Spleen (tissue), 13 donors: ENCODE measurements at regions of chr4 and their contacts with region 1.

Region 1: GRCh38 chr4:18366892-18367291 is 345.3 kb upstream of the LCORL start:
- DNase-seq: no peak
- H3K4me3 ChIP-seq: no peak overlapping the region
- H3K27ac ChIP-seq: no peak overlapping the region
- H3K4me1 ChIP-seq: no peaks in the 10 kb centered on the region
- H3K27me3 ChIP-seq: no peaks in the 10 kb centered on the region
- CTCF ChIP-seq: peak in 8 of 11 experiments; percentile 37 to 65 (median 41)
- POLR2A ChIP-seq: no peak

Region 2: DNA sequence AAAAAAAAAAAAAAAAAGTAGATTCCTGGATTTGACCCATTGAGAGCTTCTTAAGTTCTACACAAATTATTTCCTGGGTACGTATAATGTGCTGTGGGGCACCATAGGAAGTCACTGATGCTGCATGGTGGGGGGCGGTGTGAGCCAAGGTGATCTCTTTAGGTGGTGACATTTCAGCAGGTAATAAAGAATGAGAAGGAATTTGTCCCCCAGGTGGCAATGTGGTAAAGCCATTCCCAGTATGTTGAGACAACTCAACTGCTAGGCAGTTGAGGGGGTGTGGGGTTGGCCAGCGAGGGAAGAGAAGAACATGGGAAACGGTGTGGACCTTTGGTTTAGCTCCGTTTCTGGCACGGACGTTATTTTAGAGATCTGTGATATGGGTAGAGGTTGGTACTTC is 619.8 kb before region 1 on chr4:
- intact Hi-C with region 1: no loop called
- DNase-seq: no peak
- H3K4me3 ChIP-seq: no peak overlapping the region
- H3K27ac ChIP-seq: no peak overlapping the region
- H3K4me1 ChIP-seq: no peaks in the 10 kb centered on the region
- H3K27me3 ChIP-seq: no peaks in the 10 kb centered on the region
- CTCF ChIP-seq: no peak
- POLR2A ChIP-seq: no peak

Region 3: DNA sequence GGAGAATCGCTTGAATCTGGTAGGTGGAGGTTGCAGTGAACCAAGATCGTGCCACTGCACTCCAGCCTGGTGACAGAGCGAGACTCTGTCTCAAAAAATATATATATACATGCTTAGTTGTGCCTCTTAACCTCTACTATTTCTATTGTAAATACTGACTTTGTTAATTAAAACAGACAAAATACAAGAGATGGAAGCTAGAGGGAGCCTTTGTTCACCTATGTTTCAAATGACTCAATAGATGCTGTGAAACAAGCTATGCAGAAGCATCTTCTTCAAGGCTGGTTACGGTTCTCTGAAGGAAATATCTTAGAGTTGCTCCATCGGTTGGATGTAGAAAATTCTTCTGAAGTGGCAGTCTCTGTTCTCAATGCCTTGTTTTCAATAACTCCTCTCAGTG is 549.9 kb before region 1 on chr4:
- intact Hi-C with region 1: loop called (anchors 5 kb)
- DNase-seq: no peak
- H3K4me3 ChIP-seq: no peak overlapping the region
- H3K27ac ChIP-seq: no peak overlapping the region
- H3K4me1 ChIP-seq: peaks cover 0 to 14% (median 0%) of the 10 kb centered on the region in 6 donors
- H3K27me3 ChIP-seq: no peaks in the 10 kb centered on the region
- CTCF ChIP-seq: peak in 10 of 11 experiments; percentile 3 to 65 (median 50)
- POLR2A ChIP-seq: no peak

Region 4: DNA sequence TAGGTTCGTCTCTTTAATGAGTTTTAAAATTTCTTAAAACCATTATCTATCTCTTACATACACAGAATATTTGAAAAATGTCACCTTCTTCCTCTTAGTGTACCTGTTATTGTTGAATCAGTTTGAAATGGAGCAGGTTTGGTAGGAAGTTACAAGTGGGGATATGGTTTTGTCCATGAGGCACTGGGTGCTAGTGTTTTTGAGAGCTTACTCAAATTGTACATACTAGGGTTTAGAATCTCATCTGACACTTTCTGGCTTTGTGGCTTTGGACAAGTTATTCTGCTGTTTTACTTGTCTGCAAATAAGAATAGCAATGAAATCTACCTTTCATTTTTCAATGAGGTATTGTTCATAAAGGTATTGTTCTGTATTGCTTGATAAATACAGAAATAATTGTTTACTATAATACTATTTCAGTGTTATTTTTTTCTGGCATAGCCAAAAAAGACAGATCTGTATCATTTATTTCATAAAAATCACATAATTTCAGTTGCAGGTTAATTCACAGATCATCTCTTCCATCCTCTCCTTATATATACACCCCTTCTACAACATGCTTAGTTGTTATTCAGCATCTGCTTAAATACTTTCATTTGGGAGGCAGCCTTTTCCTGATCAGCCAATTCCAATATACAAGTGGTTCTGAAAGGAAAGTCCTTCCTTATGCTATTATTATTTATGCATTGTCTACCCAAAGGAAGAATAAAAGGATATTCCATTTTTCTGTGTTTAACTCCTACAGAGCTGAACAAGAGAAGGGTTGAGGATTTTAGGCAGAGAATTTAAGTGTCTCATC is 542.8 kb before region 1 on chr4:
- intact Hi-C with region 1: loop called (anchors 5 kb)
- DNase-seq: no peak
- H3K4me3 ChIP-seq: no peak overlapping the region
- H3K27ac ChIP-seq: no peak overlapping the region
- H3K4me1 ChIP-seq: no peaks in the 10 kb centered on the region
- H3K27me3 ChIP-seq: no peaks in the 10 kb centered on the region
- CTCF ChIP-seq: no peak
- POLR2A ChIP-seq: no peak